HEK293T (cell line): ENCODE measurements at regions of chr17 and their contacts with region 1.

Region 1: DNA sequence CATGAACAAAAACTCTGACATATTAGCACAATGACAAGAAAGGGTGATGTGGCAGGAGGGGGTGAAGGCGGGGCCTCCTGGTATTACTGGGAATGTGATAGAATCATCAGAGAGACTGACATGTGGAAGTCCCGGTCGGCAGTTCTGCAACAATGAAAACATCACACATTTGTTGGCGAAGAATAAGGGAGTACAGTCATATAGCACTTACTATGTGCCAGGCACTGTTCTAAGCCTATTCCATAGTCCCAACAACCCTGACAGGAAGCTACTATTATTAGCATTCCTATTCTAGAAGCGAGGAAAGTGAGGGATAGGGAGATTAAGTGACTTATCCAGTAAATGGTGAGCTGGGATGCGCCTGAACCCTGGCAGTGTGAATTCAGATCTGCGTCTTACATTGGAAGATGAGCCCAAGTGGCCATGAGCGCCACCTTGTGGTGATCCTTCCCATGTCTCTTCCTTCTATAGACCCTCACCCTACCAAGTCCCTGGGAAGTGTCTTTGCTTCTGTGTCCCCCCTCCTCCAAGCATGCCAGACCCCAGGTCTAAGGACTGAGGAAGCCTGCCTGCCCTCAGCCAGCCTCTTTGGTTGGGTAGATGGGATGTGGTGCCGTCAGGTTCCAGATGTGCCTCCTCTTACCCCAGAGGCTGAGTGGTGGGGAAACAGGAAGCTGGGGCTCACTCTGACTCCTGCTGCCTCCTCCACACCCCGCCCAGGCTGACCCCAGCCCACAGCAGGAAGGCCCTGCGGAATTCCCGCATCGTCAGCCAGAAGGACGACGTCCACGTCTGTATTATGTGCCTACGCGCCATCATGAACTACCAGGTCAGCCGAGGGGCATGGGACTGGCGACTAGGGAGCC is 14.0 kb downstream of the FMNL1 start:
- DNase-seq: peak; percentile 77

Region 2: GRCh38 chr17:45172454-45173286 is 63.0 kb before region 1 on chr17:
- CTCF ChIA-PET with region 1: no interaction called
- POLR2A ChIA-PET with region 1: no interaction called
- DNase-seq: no peak

Region 3: DNA sequence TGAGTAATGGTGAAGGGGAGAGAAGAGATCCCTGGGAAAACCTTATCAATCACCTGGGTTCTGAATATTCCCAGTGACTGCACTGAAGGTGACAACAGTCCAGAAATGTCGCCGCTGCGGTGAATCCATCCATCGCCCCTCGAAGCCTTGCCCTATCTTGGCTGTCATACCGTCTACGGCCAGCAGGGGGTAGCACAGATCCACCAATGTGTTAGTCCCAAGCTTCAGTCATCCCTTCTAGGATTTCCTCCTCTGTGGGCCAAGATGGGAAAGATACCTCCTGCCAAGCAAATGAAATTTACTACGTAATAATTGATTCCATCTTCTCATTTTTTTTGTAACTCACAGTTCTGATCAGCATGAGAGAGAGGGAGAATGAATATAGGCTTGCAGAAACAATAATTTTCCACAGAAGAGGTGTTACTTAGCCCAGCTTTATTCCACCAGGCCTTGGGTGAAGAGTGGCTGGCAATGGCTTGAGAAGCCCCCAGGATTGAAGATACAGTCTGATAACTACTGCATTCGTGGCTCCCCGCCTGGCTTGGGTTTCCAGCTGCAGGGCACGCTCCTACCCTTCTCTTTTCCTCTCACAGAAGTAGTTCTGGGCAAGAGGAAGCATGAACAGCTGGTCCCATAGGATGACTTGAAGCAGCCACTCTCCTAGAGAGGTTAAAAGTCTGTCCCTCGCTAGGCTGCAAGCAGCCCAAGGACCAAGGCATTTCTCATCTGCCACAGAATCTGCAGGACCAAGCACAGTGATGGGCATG is 16.6 kb before region 1 on chr17:
- CTCF ChIA-PET with region 1: interaction called, 25 read pairs
- POLR2A ChIA-PET with region 1: interaction called, 9 read pairs
- DNase-seq: peak; percentile 86

Region 4: GRCh38 chr17:45247429-45248131 is 11.9 kb after region 1 on chr17:
- CTCF ChIA-PET with region 1: interaction called, 15 read pairs
- POLR2A ChIA-PET with region 1: interaction called, 13 read pairs
- DNase-seq: peak; percentile 91